ENCODE measurements at regions of chr9 and their contacts with region 1.

Region 1: DNA sequence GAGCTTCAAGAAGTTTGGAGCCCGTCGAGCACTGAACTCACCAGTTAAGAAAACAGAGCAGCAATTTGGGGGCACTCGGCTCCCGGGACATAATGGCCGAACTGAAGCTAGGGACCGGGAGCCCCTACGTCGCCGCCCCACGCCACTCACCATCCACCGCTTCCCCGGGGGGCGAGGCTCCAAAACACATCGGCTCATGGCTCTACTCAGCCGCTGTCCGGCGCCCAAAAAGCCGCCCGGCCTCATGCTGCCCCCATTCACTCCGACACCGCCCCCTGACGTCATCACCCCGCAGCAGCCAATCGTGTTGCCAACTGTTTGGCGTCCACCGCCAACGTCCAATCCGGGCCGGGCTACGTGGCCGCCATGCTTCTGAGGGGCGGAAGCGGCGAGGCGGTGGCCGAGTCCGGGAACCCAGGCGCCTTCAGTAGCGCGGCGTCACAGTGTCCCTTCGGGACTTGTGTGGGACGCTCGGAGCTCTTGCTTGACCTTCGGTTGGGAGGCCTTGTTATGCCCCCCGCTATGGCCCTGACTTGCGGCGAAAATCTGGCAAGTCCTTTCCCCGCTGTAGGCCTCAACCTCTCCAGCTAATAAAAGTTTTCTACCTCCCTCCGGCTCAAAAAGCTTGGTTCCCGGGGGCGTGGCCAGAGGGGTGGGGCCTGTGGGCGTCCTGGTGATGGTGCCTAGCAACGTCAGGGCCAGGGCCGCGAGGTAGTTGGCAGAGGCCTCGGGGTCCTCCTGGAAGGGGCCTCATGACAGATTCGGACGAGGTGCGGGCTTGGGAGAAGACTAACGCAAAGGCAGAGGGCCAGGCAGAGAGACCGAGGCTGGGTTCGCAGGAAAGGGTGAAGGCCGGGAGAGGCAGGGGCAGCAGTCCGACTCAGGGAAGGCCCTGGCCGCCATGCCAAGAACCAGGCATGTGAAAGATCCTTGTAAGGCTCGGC is at the starts of genes PTRH1 and TTC16:
- DNase-seq: peak; percentile 91 to 98 (median 96)
- ATAC-seq: peak; percentile 96
- H3K4me3 ChIP-seq: peak within 1 kb of the TSS; percentile 85
- H3K4me3 Mint-ChIP-seq: peak within 1 kb of the TSS; percentile 93 to 100 (median 98)
- H3K27ac ChIP-seq: peak within 1 kb of the TSS; percentile 89
- H3K27ac Mint-ChIP-seq: peak within 1 kb of the TSS; percentile 86 to 99 (median 97)
- H3K4me1 ChIP-seq: peaks cover 31 to 32% of the 10 kb centered on the region in 2 donors
- H3K4me1 Mint-ChIP-seq: peaks cover 28 to 47% (median 30%) of the 10 kb centered on the region in 7 donors
- H3K27me3 ChIP-seq: no peaks in the 10 kb centered on the region
- H3K27me3 Mint-ChIP-seq: no peaks in the 10 kb centered on the region
- total RNA-seq, gene PTRH1: 7.8 to 9.5 (median 8.6) TPM
- total RNA-seq, gene TTC16: 0.29 to 9.9 (median 4.6) TPM

Region 2: GRCh38 chr9:127503947-127504782 is 211.5 kb before region 1 on chr9:
- CTCF ChIA-PET with region 1: no interaction called
- POLR2A ChIA-PET with region 1: no interaction called
- intact Hi-C with region 1: loop called in 1 of 2 experiments (anchors 5 kb)
- DNase-seq: peak; percentile 65 to 81 (median 75)
- ATAC-seq: peak; percentile 87
- H3K4me3 ChIP-seq: no peak overlapping the region
- H3K4me3 Mint-ChIP-seq: no peak overlapping the region
- H3K27ac ChIP-seq: no peak overlapping the region
- H3K27ac Mint-ChIP-seq: peak overlapping the region in 1 of 9 donors; percentile 69
- H3K4me1 ChIP-seq: no peaks in the 10 kb centered on the region
- H3K4me1 Mint-ChIP-seq: peaks cover 0 to 4% (median 0%) of the 10 kb centered on the region in 7 donors
- H3K27me3 ChIP-seq: no peaks in the 10 kb centered on the region
- H3K27me3 Mint-ChIP-seq: no peaks in the 10 kb centered on the region

Region 3: GRCh38 chr9:127603226-127603625 is 112.4 kb before region 1 on chr9:
- CTCF ChIA-PET with region 1: no interaction called
- POLR2A ChIA-PET with region 1: no interaction called
- intact Hi-C with region 1: no loop called
- DNase-seq: no peak
- ATAC-seq: no peak
- H3K4me3 ChIP-seq: no peak overlapping the region
- H3K4me3 Mint-ChIP-seq: no peak overlapping the region
- H3K27ac ChIP-seq: no peak overlapping the region
- H3K27ac Mint-ChIP-seq: no peak overlapping the region
- H3K4me1 ChIP-seq: peaks cover 0 to 2% of the 10 kb centered on the region in 2 donors
- H3K4me1 Mint-ChIP-seq: peaks cover 7 to 9% (median 8%) of the 10 kb centered on the region in 7 donors
- H3K27me3 ChIP-seq: no peaks in the 10 kb centered on the region
- H3K27me3 Mint-ChIP-seq: peaks cover 0 to 14% (median 0%) of the 10 kb centered on the region in 5 donors

Region 4: DNA sequence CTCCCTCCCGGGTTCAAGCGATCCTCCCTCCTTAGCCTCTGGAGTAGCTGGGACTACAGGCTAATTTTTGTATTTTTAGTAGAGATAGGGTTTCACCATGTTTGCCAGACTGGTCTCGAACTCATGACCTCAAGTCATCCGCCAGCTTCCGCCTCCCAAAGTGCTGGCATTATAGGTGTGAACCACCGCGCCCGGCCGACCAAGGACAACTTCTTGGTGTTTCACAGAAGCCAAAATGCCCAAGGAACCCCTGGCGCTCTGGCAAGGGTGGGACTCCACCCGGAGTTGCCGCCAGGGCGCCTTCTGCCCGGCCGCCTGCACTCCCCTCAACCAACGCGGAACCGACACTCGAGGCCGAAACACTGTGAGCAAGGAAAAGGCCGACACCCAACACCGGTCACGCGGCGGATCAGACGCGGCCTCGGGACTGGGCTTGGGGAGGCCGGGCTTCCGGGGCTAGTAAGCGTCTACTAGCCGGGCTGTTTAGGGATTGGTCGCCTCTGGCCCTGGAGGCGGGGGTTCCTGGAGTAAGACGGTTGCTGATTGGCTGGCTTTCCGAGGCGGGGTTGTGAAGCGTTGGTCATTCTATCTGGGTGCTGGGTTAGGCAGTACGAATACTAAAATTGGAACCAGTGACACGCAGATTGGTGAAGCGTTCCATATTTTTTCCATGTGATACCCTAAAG is 16.5 kb before region 1 on chr9:
- CTCF ChIA-PET with region 1: no interaction called
- POLR2A ChIA-PET with region 1: interaction called, 5 read pairs
- intact Hi-C with region 1: loop called (anchors 1 to 2 kb)
- DNase-seq: peak; percentile 63 to 81 (median 78)
- ATAC-seq: peak; percentile 99
- H3K4me3 ChIP-seq: peak overlapping the region; percentile 62
- H3K4me3 Mint-ChIP-seq: peak overlapping the region; percentile 73 to 87 (median 84)
- H3K27ac ChIP-seq: peak overlapping the region; percentile 26
- H3K27ac Mint-ChIP-seq: peak overlapping the region; percentile 10 to 91 (median 77)
- H3K4me1 ChIP-seq: peaks cover 6 to 7% of the 10 kb centered on the region in 2 donors
- H3K4me1 Mint-ChIP-seq: peaks cover 5 to 13% (median 12%) of the 10 kb centered on the region in 7 donors
- H3K27me3 ChIP-seq: no peaks in the 10 kb centered on the region
- H3K27me3 Mint-ChIP-seq: peaks cover 0 to 2% (median 0%) of the 10 kb centered on the region in 5 donors

Region 5: GRCh38 chr9:127770905-127771569 is 55.4 kb after region 1 on chr9:
- CTCF ChIA-PET with region 1: no interaction called
- POLR2A ChIA-PET with region 1: interaction called, 3 read pairs
- intact Hi-C with region 1: loop called in 1 of 2 experiments (anchors 1 kb)
- DNase-seq: peak; percentile 85 to 99 (median 92)
- ATAC-seq: peak; percentile 92
- H3K4me3 ChIP-seq: peak overlapping the region; percentile 71
- H3K4me3 Mint-ChIP-seq: peak overlapping the region; percentile 74 to 92 (median 86)
- H3K27ac ChIP-seq: peak overlapping the region; percentile 90
- H3K27ac Mint-ChIP-seq: peak overlapping the region; percentile 90 to 96 (median 94)
- H3K4me1 ChIP-seq: peaks cover 57 to 59% of the 10 kb centered on the region in 2 donors
- H3K4me1 Mint-ChIP-seq: peaks cover 44 to 82% (median 71%) of the 10 kb centered on the region in 7 donors
- H3K27me3 ChIP-seq: no peaks in the 10 kb centered on the region
- H3K27me3 Mint-ChIP-seq: no peaks in the 10 kb centered on the region

Measured in naive thymus-derived CD4-positive, alpha-beta T cell (primary cell).